Adrenal gland (tissue), 19 donors: ENCODE measurements at regions of chr1 and their contacts with region 1.

Region 1: GRCh38 chr1:61337981-61338848 is 255.9 kb downstream of the NFIA start:
- DNase-seq: peak; percentile 67 to 91 (median 86)
- H3K4me3 ChIP-seq: peak overlapping the region in 1 of 4 donors; percentile 32
- H3K27ac ChIP-seq: peak overlapping the region in 4 of 5 donors; percentile 64 to 81 (median 71)
- H3K4me1 ChIP-seq: peaks cover 19 to 30% of the 10 kb centered on the region in 2 donors
- H3K27me3 ChIP-seq: no peaks in the 10 kb centered on the region
- CTCF ChIP-seq: peak; percentile 71 to 89 (median 80)
- POLR2A ChIP-seq: peak in 1 of 2 donors; percentile 22

Region 2: DNA sequence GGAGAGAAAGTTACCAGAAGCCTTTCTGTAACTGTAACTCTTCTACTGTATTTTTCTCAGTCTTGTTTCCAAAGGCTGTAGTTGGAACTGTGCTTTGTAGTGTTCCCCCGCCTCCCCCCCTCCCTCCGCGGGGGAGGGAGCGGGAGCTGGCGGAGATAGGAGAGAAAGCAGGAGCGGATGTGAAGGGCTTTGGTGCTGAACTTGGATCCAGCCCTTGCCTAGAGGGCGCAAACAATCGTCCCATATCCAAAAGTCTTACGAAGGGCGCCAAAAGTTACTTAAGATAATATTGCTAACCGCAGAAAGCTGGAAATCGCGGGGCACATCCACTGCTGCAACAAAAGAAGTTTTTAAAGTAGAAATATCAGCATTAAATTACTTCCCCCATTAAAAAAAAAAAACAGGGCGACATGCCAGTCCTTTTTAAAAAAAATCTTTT is 258.3 kb before region 1 on chr1:
- intact Hi-C with region 1: loop called (anchors 10 kb)
- DNase-seq: peak; percentile 81 to 92 (median 85)
- H3K4me3 ChIP-seq: peak overlapping the region in 1 of 4 donors; percentile 78
- H3K27ac ChIP-seq: peak overlapping the region; percentile 39 to 98 (median 94)
- H3K4me1 ChIP-seq: peaks cover 45 to 60% of the 10 kb centered on the region in 2 donors
- H3K27me3 ChIP-seq: no peaks in the 10 kb centered on the region
- CTCF ChIP-seq: peak in 3 of 6 experiments; percentile 6 to 27 (median 9)
- POLR2A ChIP-seq: peak in 1 of 2 donors; percentile 75